ENCODE measurements at regions of chr14 and their contacts with region 1.

Region 1: GRCh38 chr14:88551094-88551870 is 3.5 kb downstream of the PTPN21 start:
- DNase-seq: peak; percentile 55 to 77
- ATAC-seq: peak; percentile 81 to 83
- H3K4me3 ChIP-seq: peak overlapping the region; percentile 74 to 82 (median 77)
- H3K27ac ChIP-seq: peak overlapping the region; percentile 79 to 94 (median 84)
- H3K4me1 ChIP-seq: peaks cover 24 to 35% of the 10 kb centered on the region in 2 donors
- H3K27me3 ChIP-seq: no peaks in the 10 kb centered on the region
- CTCF ChIP-seq: peak; percentile 30 to 47 (median 43)
- POLR2A ChIP-seq: peak; percentile 49 to 56

Region 2: GRCh38 chr14:87992718-87993628 is 558.3 kb before region 1 on chr14 and contains the start of gene GALC:
- in situ Hi-C with region 1: no loop called
- intact Hi-C with region 1: loop called (anchors 10 kb)
- DNase-seq: peak; percentile 88 to 89
- ATAC-seq: peak; percentile 91 to 93
- H3K4me3 ChIP-seq: peak within 1 kb of the TSS; percentile 74 to 88 (median 80)
- H3K27ac ChIP-seq: peak within 1 kb of the TSS; percentile 86 to 92 (median 88)
- H3K4me1 ChIP-seq: peaks cover 13 to 18% of the 10 kb centered on the region in 2 donors
- H3K27me3 ChIP-seq: no peaks in the 10 kb centered on the region
- CTCF ChIP-seq: no peak
- POLR2A ChIP-seq: peak in 1 of 2 donors; percentile 54
- total RNA-seq, gene GALC: 10.5 to 23.2 (median 14.6) TPM

Region 3: GRCh38 chr14:88129306-88130056 is 421.8 kb before region 1 on chr14:
- in situ Hi-C with region 1: no loop called
- intact Hi-C with region 1: no loop called
- DNase-seq: peak in 1 of 2 donors; percentile 7
- ATAC-seq: no peak
- H3K4me3 ChIP-seq: no peak overlapping the region
- H3K27ac ChIP-seq: no peak overlapping the region
- H3K4me1 ChIP-seq: no peaks in the 10 kb centered on the region
- H3K27me3 ChIP-seq: no peaks in the 10 kb centered on the region
- CTCF ChIP-seq: no peak
- POLR2A ChIP-seq: no peak

Region 4: DNA sequence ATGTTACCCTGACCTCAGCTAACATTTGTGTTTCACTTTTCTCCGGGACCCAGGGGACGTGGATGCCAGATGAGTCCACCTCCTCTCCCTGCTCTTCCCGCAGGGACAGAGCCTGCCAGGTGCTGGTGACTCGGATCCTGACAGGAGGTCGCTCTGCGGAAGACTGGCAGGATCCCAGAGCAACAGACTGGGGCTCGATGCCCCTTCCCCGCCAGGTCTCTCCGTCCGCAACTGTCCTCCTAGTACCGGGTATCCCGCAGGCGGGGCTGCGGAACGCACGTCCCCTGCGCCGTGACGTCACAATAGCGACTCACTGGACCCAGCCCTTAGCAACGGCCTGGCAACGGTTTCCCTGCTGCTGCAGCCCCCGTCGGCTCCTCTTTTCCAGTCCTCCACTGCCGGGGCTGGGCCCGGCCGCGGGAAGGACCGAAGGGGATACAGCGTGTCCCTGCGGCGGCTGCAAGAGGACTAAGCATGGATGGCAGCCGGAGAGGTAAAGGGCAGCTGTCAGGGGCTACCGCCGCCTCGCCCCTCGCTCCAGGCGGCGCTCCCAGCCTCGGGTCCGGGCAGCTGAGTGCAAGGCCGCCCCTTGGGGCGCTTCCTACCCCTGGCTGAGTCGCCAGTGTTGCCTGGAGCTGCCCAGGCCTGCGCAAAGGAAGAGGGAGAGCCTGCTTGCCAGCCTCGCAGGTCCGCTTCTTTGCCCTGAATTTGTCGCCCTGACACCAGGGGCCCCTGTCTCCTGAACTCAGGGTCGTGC is 165.8 kb before region 1 on chr14 and contains the start of gene SPATA7:
- in situ Hi-C with region 1: no loop called
- intact Hi-C with region 1: loop called (anchors 10 kb)
- DNase-seq: peak; percentile 80 to 84
- ATAC-seq: peak; percentile 93 to 98
- H3K4me3 ChIP-seq: peak within 1 kb of the TSS; percentile 83 to 98 (median 91)
- H3K27ac ChIP-seq: peak within 1 kb of the TSS; percentile 71 to 82 (median 77)
- H3K4me1 ChIP-seq: peaks cover 13% of the 10 kb centered on the region in 2 donors
- H3K27me3 ChIP-seq: no peaks in the 10 kb centered on the region
- CTCF ChIP-seq: no peak
- POLR2A ChIP-seq: peak; percentile 51 to 53
- total RNA-seq, gene SPATA7: 7.2 to 11.2 (median 10.1) TPM

Region 5: DNA sequence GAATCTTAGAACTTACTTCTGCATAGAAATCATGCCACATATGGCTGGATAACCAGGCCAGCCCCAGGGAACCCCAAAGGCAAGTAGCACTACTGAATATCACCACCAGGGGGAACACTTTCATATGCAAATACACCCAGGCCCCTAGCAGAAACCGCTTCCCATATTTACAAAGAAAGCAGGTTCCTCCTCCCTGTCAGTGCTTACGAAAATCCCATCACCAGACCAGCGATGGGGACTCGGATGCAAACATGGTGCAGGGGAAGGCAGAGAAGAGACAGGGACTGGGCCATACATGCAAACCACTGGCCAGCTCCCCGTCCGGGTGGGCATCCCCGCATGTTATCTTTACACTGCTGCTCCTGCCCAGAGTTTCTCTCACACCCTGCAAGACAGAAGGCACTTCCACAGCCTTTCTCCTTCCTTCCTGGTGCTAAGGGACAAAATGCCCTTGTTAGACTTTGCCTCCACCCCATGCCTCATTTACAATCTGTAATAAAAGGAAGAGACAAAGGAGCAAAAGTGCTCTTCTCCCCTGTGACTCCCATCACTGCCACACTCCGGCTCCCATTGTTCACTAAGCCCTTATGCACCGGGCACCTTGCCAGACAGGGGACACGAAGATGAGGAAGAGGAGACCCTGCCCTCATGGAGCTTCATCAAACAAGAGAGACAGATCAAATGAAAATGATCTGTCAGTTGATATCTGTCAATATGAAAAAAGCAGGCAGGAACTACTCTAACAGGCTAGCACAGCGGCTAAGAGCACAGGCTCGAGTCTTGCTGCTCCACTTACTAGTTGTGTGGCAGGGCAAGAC is 58.8 kb before region 1 on chr14:
- in situ Hi-C with region 1: loop called in 2 of 4 experiments (anchors 10 kb)
- intact Hi-C with region 1: loop called (anchors 2 kb)
- DNase-seq: peak; percentile 37 to 40
- ATAC-seq: peak; percentile 78 to 89
- H3K4me3 ChIP-seq: no peak overlapping the region
- H3K27ac ChIP-seq: no peak overlapping the region
- H3K4me1 ChIP-seq: no peaks in the 10 kb centered on the region
- H3K27me3 ChIP-seq: no peaks in the 10 kb centered on the region
- CTCF ChIP-seq: peak; percentile 74 to 91 (median 86)
- POLR2A ChIP-seq: no peak

Region 6: DNA sequence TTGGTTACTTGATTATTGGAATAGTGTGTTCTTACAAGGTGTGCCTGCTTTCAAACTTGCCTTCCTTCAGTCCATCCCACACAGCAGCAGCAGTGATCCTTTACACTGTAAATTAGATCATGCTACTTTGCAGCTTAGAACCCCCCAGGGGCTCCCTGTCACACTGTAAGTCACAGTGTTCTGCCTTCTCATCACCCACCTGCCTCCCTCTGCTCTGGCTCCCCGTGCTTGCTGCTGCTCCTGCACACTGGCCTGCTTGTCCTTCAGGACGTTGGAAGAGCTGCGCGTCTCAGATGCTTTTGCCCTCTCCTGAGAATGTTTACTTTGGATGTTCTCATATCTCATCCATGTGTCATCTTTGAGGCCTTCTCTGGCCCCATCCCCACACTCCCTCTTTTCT is 38.9 kb after region 1 on chr14:
- in situ Hi-C with region 1: no loop called
- intact Hi-C with region 1: no loop called
- DNase-seq: no peak
- ATAC-seq: no peak
- H3K4me3 ChIP-seq: no peak overlapping the region
- H3K27ac ChIP-seq: no peak overlapping the region
- H3K4me1 ChIP-seq: no peaks in the 10 kb centered on the region
- H3K27me3 ChIP-seq: no peaks in the 10 kb centered on the region
- CTCF ChIP-seq: no peak
- POLR2A ChIP-seq: no peak

Region 7: GRCh38 chr14:90256354-90257131 is 1705.3 kb after region 1 on chr14 and contains the start of gene PSMC1:
- in situ Hi-C with region 1: no loop called
- intact Hi-C with region 1: loop called (anchors 5 kb)
- DNase-seq: peak; percentile 87 to 92
- ATAC-seq: peak; percentile 97 to 98
- H3K4me3 ChIP-seq: peak within 1 kb of the TSS; percentile 83 to 99 (median 89)
- H3K27ac ChIP-seq: peak within 1 kb of the TSS; percentile 89 to 98 (median 94)
- H3K4me1 ChIP-seq: peaks cover 20% of the 10 kb centered on the region in 2 donors
- H3K27me3 ChIP-seq: no peaks in the 10 kb centered on the region
- CTCF ChIP-seq: no peak
- POLR2A ChIP-seq: peak; percentile 58 to 80
- total RNA-seq, gene PSMC1: 374 to 642 (median 528) TPM